ENCODE measurements at regions of chr10 and their contacts with region 1.

Region 1: DNA sequence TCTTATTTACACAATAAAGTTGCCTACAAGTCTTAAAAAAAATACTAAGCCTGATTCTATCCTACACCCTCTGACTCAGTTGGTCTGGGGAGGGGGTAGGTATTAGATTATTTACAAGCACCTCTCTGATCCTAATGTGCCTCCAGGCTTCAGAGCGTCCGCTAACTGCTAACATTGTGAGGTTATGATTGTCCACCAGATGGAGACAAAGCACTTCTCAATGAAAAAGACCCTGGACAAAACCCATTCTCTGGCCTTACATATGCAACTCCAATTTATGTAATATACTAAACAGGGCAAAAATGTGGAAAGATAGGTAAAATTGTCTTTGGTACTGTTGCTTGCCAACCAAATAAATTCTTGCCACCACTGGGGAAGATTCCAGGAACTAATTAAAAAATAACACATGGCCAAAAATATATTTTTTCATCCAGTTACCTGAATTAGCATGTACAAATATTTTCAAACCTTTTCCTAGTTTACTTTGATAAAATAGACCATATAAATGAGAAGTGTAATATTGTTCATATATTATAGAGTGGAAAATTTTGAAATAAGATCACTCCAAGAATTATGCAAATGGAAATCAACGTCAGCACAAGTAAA is 92.4 kb downstream of the KIF20B start:
- DNase-seq: peak; percentile 27 to 47 (median 34)
- ATAC-seq: peak; percentile 70
- H3K4me3 ChIP-seq: no peak overlapping the region
- H3K27ac ChIP-seq: no peak overlapping the region
- H3K4me1 ChIP-seq: no peaks in the 10 kb centered on the region
- H3K27me3 ChIP-seq: no peaks in the 10 kb centered on the region
- CTCF ChIP-seq: peak; percentile 53 to 78 (median 71)
- POLR2A ChIP-seq: no peak

Region 2: GRCh38 chr10:90787393-90788198 is 993.8 kb after region 1 on chr10:
- intact Hi-C with region 1: loop called (anchors 10 kb)
- DNase-seq: peak; percentile 34 to 47 (median 40)
- ATAC-seq: peak; percentile 53
- H3K4me3 ChIP-seq: no peak overlapping the region
- H3K27ac ChIP-seq: no peak overlapping the region
- H3K4me1 ChIP-seq: no peaks in the 10 kb centered on the region
- H3K27me3 ChIP-seq: no peaks in the 10 kb centered on the region
- CTCF ChIP-seq: peak; percentile 58 to 87 (median 64)
- POLR2A ChIP-seq: no peak

Measured in body of pancreas (tissue), 4 donors.